Dorsolateral prefrontal cortex (tissue), 120 donors: ENCODE measurements at regions of chr16 and their contacts with region 1.

Region 1: DNA sequence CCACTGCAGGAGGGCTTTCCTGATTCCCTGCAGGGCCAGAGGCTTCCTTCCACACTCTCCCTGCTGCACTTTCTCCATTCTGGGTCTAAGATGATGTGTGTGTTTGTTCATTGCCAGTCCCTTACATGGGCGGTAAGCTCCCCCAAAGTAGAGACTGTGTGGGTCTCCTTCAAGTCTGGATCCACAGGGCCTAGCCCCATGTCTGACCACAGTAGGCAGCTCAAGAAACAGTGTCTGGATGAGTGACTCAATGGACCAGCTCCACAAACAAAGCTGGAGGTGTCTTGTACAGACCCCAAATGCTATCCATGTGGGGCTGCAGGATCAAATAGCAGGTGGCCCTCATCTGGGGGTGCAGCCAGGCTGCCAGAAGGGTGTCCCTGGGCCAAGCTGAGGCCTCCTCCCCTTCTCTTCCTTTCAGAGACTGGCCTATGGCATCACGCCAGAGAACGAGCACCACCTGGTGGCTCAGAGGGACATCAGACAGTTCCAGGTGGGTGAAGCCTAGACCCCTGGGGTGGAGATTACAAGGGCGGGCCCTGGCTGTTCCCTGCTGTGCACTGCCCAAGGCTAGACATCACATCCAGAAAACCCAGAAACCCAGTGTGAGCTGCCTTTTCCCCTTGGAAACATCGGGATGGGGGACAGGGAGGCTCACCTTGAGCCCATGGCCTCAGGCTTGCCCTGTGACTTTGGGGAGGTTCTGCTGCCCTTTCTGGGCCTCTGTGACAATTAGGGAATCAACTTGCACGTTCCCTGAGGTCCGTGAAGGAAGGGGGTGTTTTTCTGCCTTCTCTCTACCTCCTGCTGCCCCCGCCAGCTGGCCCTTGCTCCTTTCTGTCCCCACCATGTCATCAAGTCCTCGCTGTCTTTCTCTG is 45.9 kb downstream of the SLC6A2 start:
- DNase-seq: peak in 3 of 10 donors; percentile 14 to 50 (median 23)
- H3K4me3 ChIP-seq: no peak overlapping the region
- H3K27ac ChIP-seq: no peak overlapping the region
- H3K27me3 ChIP-seq: peaks cover 0 to 3% (median 0%) of the 10 kb centered on the region in 45 donors
- CTCF ChIP-seq: peak in 54 of 56 donors; percentile 22 to 74 (median 52)

Region 2: DNA sequence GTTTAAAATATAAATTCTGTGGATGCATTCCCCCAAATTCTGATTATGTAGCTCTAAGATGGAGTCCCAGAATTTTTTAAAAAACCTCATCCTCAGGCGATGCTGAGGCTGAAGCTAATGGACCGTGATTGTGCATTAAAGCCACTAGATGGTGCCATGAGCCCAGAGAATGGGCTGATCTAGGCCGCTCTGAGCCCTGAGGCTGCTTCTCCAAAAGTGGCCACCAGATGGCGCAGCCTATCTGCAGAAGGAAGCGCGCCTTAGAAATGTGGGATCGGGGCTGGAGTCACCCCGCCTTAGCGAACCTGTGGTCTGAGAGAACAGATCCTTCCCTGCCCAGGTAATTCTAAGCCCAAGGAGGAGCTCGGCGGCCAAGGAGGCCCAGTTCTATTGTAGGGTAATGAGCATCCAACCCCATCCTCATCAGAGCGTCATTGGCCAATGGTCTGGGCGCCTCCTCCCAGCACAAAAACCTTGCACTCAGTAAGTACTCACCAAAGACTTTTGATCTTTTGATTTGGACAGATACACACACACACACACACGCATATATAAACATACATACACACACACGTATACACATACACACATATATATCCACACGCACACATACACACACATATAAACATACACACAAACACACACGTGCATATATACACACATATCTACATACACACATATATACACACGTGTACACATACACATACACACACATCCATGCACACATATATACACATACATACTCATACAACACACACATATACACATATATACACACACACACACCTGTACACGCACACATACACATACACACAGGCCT is 236.4 kb before region 1 on chr16:
- intact Hi-C with region 1: loop called (anchors 2 kb)
- DNase-seq: peak; percentile 79 to 93 (median 88)
- H3K4me3 ChIP-seq: peak overlapping the region in 22 of 59 donors; percentile 1 to 50 (median 26)
- H3K27ac ChIP-seq: no peak overlapping the region
- H3K27me3 ChIP-seq: no peaks in the 10 kb centered on the region
- CTCF ChIP-seq: peak; percentile 99 to 100 (median 100)

Region 3: DNA sequence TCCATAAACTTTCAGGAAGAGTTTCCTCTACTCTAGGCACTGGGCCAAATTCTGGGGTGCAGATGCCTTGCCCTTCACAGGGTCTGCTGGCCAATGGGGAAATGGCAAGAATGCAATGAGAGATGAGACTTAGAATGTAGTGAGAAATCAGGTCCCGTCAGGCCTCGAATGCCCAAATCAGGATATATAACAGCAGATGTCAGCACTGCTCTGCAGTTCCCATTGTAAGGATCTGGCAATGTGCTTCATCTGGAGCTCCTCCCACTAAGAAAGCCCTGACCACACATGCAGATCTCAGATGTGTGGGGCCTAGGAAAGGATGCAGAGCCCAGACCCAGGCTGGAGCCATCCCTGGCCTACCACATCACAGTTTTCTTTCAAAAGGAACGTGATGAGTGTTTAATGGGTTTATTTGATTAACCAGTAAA is 206.7 kb before region 1 on chr16:
- intact Hi-C with region 1: loop called (anchors 2 to 10 kb)
- DNase-seq: peak in 3 of 10 donors; percentile 34 to 74 (median 69)
- H3K4me3 ChIP-seq: no peak overlapping the region
- H3K27ac ChIP-seq: peak overlapping the region in 22 of 59 donors; percentile 2 to 70 (median 46)
- H3K27me3 ChIP-seq: no peaks in the 10 kb centered on the region
- CTCF ChIP-seq: peak in 55 of 56 donors; percentile 48 to 89 (median 67)

Region 4: GRCh38 chr16:55543472-55543871 is 158.2 kb before region 1 on chr16:
- intact Hi-C with region 1: loop called (anchors 2 to 5 kb)
- DNase-seq: no peak
- H3K4me3 ChIP-seq: no peak overlapping the region
- H3K27ac ChIP-seq: no peak overlapping the region
- H3K27me3 ChIP-seq: no peaks in the 10 kb centered on the region
- CTCF ChIP-seq: peak in 55 of 56 donors; percentile 41 to 88 (median 68)

Region 5: GRCh38 chr16:55647798-55648197 is 53.9 kb before region 1 on chr16:
- intact Hi-C with region 1: loop called in 1 of 2 experiments (anchors 2 kb)
- DNase-seq: no peak
- H3K4me3 ChIP-seq: no peak overlapping the region
- H3K27ac ChIP-seq: no peak overlapping the region
- H3K27me3 ChIP-seq: peaks cover 0 to 15% (median 0%) of the 10 kb centered on the region in 45 donors
- CTCF ChIP-seq: peak in 37 of 56 donors; percentile 15 to 50 (median 25)

Region 6: DNA sequence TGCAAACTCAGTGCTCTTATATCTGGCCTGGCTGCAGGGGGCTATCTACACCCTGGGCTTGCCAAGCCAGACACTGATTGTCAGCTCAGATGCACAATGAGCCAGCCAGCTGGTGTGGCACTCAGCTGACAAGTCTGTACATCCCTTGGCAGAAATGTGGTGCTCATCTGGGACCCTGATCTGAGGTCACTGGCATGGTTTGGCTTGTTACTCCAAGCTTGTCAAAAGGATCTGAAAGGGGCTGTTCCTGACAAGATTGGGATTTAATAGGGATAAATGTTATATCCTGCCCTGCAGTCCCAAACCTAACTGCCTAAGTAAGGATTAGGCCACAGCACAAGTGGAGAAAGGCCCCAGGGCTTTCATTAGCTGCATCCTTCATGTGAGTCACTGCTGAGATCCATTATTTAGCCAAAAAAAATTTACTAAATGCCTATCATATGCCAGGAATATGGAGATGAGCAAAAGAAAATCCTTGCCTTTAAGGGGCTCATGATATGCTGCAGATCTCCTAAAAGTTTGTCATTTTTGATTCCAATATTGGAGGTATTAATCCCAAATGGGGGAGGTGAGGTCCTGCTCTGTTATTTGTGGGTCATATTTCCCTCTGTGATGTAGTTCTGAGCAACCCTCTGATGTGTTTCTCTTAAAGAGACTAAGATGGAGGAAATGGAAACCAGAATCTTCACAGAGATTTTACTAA is 39.6 kb before region 1 on chr16:
- intact Hi-C with region 1: loop called (anchors 5 kb)
- DNase-seq: peak in 4 of 10 donors; percentile 27 to 55 (median 41)
- H3K4me3 ChIP-seq: no peak overlapping the region
- H3K27ac ChIP-seq: no peak overlapping the region
- H3K27me3 ChIP-seq: peaks cover 0 to 19% (median 7%) of the 10 kb centered on the region in 45 donors
- CTCF ChIP-seq: peak in 1 of 56 donors; percentile 15